Activated CD4-positive, alpha-beta T cell treated with anti-CD3 and anti-CD28 coated beads for 36 hours (primary cell): ENCODE measurements at regions of chr15 and their contacts with region 1.

Region 1: GRCh38 chr15:92831655-92832328 is 68.3 kb upstream of the CHD2 start:
- DNase-seq: peak; percentile 96
- ATAC-seq: peak; percentile 95
- H3K4me3 Mint-ChIP-seq: peak overlapping the region; percentile 65
- H3K27ac Mint-ChIP-seq: peak overlapping the region; percentile 96
- H3K4me1 Mint-ChIP-seq: peaks cover 58% of the 10 kb centered on the region
- H3K27me3 Mint-ChIP-seq: no peaks in the 10 kb centered on the region

Region 2: DNA sequence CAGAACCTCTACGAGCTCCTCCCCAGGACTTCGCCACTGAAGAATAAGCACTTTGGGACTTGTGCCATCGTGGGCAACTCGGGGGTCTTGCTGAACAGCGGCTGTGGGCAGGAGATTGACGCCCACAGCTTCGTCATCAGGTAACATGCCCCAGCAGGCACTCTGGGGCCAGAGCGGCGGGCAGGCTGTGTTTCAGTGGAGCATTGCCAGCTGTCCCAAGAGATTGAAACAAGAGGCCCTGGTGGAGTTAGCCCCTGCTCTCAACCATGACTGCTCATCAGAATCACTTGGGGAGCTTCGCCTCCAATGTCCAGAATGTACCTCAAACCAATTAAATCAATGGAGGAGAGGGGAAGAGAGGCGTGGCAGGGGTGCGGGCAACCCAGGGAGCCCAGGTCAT is 393.3 kb before region 1 on chr15:
- CTCF ChIA-PET with region 1: no interaction called
- POLR2A ChIA-PET with region 1: no interaction called
- intact Hi-C with region 1: no loop called
- DNase-seq: no peak
- ATAC-seq: no peak
- H3K4me3 Mint-ChIP-seq: no peak overlapping the region
- H3K27ac Mint-ChIP-seq: no peak overlapping the region
- H3K4me1 Mint-ChIP-seq: no peaks in the 10 kb centered on the region
- H3K27me3 Mint-ChIP-seq: peaks cover 5% of the 10 kb centered on the region

Region 3: GRCh38 chr15:92820236-92821021 is 11.4 kb before region 1 on chr15:
- CTCF ChIA-PET with region 1: interaction called, 59 read pairs
- POLR2A ChIA-PET with region 1: interaction called, 26 read pairs
- intact Hi-C with region 1: loop called (anchors 1 kb)
- DNase-seq: peak; percentile 92
- ATAC-seq: peak; percentile 63
- H3K4me3 Mint-ChIP-seq: peak overlapping the region; percentile 82
- H3K27ac Mint-ChIP-seq: peak overlapping the region; percentile 77
- H3K4me1 Mint-ChIP-seq: peaks cover 64% of the 10 kb centered on the region
- H3K27me3 Mint-ChIP-seq: no peaks in the 10 kb centered on the region